Activated naive CD8-positive, alpha-beta T cell treated with anti-CD3 and anti-CD28 coated beads, Interleukin-2, amount 10 ng/mL, durations not matched to agents 7 days and 5 days (primary cell): ENCODE measurements at regions of chr1 and their contacts with region 1.

Region 1: GRCh38 chr1:156860113-156860627 is 495 bp upstream of the NTRK1 start:
- DNase-seq: peak; percentile 80
- ATAC-seq: peak; percentile 40
- H3K4me3 Mint-ChIP-seq: peak overlapping the region; percentile 85
- H3K27ac Mint-ChIP-seq: peak overlapping the region; percentile 58
- H3K4me1 Mint-ChIP-seq: peaks cover 43% of the 10 kb centered on the region
- H3K27me3 Mint-ChIP-seq: peaks cover 37% of the 10 kb centered on the region

Region 2: GRCh38 chr1:156689035-156689952 is 170.9 kb before region 1 on chr1:
- POLR2A ChIA-PET with region 1: no interaction called
- DNase-seq: peak; percentile 74
- ATAC-seq: peak; percentile 93
- H3K4me3 Mint-ChIP-seq: no peak overlapping the region
- H3K27ac Mint-ChIP-seq: peak overlapping the region; percentile 64
- H3K4me1 Mint-ChIP-seq: peaks cover 24% of the 10 kb centered on the region
- H3K27me3 Mint-ChIP-seq: peaks cover 61% of the 10 kb centered on the region

Region 3: DNA sequence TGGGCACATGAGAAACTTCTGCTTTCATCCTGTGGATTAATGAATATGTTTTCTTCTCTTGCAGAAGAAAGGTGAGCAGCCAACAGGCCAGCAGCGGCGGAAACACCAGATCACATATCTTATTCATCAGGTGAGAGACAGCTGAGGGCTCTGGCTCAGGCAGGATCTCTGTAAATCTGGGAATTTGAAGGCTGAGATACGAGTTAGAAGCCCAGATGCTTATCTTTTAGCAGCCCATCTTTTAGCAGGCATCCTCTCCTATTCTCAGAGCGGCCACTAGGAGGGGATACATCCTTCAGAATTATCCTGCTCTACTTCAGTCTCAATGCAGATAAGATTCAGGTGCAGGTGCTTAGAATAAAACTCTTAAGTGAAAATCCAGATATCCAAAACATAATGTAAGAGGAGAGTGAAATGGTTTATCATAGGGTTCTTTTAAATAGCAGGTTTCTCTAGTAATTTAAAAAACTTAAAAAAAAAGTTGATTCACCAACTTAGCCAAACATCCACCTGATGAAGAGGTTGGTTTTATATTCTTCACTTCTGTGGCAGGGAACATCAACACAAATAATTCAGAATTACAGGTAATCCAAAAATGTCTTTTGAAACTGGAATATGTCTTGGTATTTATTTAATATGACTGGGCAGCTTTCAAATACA is 62.8 kb before region 1 on chr1:
- POLR2A ChIA-PET with region 1: interaction called, 41 read pairs
- DNase-seq: no peak
- ATAC-seq: peak; percentile 79
- H3K4me3 Mint-ChIP-seq: no peak overlapping the region
- H3K27ac Mint-ChIP-seq: no peak overlapping the region
- H3K4me1 Mint-ChIP-seq: peaks cover 13% of the 10 kb centered on the region
- H3K27me3 Mint-ChIP-seq: no peaks in the 10 kb centered on the region

Region 4: DNA sequence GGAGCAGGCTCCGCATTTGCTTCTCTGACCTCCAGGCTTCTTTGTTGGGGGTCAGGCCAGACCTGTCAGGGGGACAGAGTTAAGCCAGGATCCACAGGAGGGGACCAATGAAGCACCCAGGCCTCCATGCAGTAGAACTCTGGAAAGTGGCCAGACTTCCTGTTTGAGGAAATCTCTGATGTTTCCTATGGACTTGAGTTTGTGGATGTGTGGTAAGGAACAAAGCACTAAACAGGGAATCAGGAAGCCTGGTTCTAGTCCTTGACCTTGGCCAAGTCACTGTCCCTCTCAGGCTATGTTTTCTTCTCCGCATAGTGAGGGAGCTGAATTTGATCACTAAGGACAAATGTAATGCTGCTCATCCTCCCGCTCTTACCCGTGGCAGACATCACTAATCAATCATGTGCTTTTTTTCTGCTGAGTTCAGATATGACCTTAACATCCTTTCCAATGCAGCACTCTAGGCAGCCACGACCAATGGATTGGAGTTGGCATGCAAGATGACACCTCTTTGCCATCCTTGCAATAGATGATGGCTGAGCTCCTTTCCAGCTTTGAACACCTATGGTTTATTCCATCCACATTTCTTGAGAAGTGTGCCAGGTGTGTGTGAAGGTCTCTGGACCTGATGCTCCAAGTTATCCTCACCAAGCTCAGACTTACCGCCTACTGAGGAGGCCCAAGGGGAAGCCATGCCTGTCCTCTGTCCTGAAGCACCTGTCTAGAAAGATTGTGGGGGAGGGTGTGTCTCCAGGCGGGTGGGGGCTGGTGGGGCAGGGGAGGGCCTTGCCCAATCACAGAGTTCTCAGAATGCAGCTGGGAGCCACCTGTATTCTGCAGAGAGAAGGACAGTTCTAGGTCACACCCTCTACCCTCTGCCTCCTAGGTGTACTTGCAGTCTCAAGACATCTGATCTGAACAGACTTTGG is 53.4 kb before region 1 on chr1:
- POLR2A ChIA-PET with region 1: interaction called, 41 read pairs
- DNase-seq: no peak
- ATAC-seq: no peak
- H3K4me3 Mint-ChIP-seq: peak overlapping the region; percentile 62
- H3K27ac Mint-ChIP-seq: peak overlapping the region; percentile 90
- H3K4me1 Mint-ChIP-seq: peaks cover 49% of the 10 kb centered on the region
- H3K27me3 Mint-ChIP-seq: no peaks in the 10 kb centered on the region

Region 5: DNA sequence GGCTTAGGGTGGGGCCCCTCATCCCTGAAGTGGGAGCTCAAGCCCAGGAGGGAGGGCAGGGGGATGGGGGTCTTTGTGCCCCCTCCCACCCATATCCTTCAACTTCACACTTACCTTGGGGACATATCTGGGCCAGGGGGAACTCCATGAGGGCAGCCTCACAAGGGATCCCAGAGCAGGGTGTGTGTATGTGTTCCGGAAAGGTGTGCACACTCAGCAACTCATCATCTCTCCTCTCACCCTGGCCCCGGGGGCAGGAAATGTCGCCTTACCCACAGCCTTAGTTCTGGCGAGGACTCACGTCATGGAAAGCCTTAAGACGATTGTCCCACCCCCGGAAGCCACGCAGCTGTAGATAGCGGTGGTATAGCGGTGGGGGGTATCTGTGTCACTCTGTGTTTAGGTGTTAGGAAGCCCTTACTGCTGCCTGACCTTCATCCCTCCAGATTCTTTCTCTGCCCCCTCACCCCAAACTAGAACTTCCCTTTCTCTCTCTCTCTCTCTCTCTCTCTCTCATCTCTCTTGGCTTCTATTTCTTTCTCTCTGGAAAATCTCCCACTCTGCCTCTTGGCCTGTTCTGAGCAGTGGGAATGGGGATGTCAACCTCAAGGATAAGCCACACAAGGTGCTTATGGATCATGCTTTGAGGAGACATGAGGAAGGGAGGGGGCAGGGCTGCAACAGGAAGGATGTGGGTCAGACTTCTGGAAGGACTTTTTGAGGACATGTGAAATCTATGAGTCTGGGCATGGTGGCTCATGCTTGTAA is 43.4 kb before region 1 on chr1 and contains the start of gene SH2D2A:
- POLR2A ChIA-PET with region 1: interaction called, 30 read pairs
- DNase-seq: peak; percentile 88
- ATAC-seq: peak; percentile 89
- H3K4me3 Mint-ChIP-seq: peak within 1 kb of the TSS; percentile 90
- H3K27ac Mint-ChIP-seq: peak within 1 kb of the TSS; percentile 100
- H3K4me1 Mint-ChIP-seq: peaks cover 48% of the 10 kb centered on the region
- H3K27me3 Mint-ChIP-seq: no peaks in the 10 kb centered on the region
- total RNA-seq, gene SH2D2A: 86.0 to 89.2 TPM

Region 6: DNA sequence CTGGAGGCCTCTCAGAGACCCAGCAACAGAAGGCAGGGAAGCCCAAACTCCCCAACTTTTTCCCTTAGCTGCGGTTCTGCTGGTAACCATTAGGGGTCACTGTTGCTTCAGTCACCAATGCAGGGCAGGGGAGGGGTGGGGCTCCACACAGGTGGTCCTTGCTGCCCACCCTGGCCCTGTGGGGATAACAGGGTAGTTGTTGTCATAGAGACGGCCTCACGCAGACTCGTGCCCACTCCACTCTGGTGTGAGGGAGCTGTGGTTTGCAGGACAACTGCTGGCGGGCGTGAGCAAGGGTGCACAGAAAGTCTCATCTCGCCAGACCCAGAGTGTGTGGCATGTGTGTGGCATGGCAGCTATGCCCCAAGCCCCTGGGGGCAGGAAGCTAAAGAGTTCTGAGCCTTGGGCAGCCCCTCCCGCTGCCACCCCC is 21.2 kb before region 1 on chr1:
- POLR2A ChIA-PET with region 1: interaction called, 13 read pairs
- DNase-seq: no peak
- ATAC-seq: peak; percentile 48
- H3K4me3 Mint-ChIP-seq: no peak overlapping the region
- H3K27ac Mint-ChIP-seq: peak overlapping the region; percentile 55
- H3K4me1 Mint-ChIP-seq: peaks cover 24% of the 10 kb centered on the region
- H3K27me3 Mint-ChIP-seq: peaks cover 14% of the 10 kb centered on the region

Region 7: DNA sequence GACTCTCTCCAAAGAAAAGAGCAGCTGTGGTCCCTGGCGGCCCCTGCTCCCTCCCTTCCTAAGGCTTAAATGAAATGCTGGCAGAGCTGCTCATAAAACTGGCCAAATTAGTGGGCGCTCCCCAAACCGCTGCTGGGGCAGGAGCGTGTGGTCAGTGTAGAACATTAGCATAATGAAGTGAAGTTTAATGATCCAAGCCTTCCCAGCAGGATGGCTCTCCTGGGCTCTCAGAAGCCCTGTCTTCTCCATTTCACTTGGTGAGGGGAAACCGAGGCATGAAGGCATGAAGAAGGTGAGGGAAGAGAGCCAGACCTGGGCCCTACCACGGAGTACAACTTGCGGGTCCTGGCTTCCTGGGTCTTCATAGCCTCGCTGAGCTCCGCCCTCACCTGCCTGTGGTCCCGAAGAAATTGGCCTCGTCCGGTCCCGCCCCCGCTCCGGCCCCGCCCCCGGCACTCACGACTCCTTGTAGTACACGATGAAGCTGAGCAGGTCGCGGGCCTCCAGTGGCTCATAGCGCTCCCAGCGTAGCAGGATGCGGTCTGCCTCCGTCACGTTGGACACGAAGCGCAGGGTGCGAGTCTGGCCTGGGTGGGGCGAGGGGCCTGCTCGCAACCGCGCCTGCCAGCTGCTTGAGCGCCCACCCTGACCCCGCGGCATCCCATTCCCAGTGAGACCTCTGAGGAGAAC is 11.6 kb before region 1 on chr1:
- POLR2A ChIA-PET with region 1: interaction called, 54 read pairs
- DNase-seq: peak; percentile 80
- ATAC-seq: peak; percentile 91
- H3K4me3 Mint-ChIP-seq: peak overlapping the region; percentile 79
- H3K27ac Mint-ChIP-seq: peak overlapping the region; percentile 81
- H3K4me1 Mint-ChIP-seq: peaks cover 31% of the 10 kb centered on the region
- H3K27me3 Mint-ChIP-seq: peaks cover 28% of the 10 kb centered on the region

Region 8: GRCh38 chr1:156892190-156893047 is 32.2 kb after region 1 on chr1:
- POLR2A ChIA-PET with region 1: interaction called, 20 read pairs
- DNase-seq: peak; percentile 93
- ATAC-seq: peak; percentile 97
- H3K4me3 Mint-ChIP-seq: peak overlapping the region; percentile 76
- H3K27ac Mint-ChIP-seq: no peak overlapping the region
- H3K4me1 Mint-ChIP-seq: peaks cover 15% of the 10 kb centered on the region
- H3K27me3 Mint-ChIP-seq: peaks cover 49% of the 10 kb centered on the region